PC-3 (cell line): ENCODE measurements at regions of chr4 and their contacts with region 1.

Region 1: GRCh38 chr4:112604589-112604988 is 32.1 kb downstream of the ZGRF1 start:
- DNase-seq: peak; percentile 55
- ATAC-seq: peak; percentile 88
- H3K4me3 ChIP-seq: no peak overlapping the region
- H3K27ac ChIP-seq: no peak overlapping the region
- H3K4me1 ChIP-seq: no peaks in the 10 kb centered on the region
- H3K27me3 ChIP-seq: no peaks in the 10 kb centered on the region
- CTCF ChIP-seq: peak; percentile 64

Region 2: GRCh38 chr4:112523764-112524505 is 80.7 kb before region 1 on chr4:
- CTCF ChIA-PET with region 1: no interaction called
- POLR2A ChIA-PET with region 1: no interaction called
- intact Hi-C with region 1: loop called (anchors 2 kb)
- DNase-seq: peak; percentile 71
- ATAC-seq: peak; percentile 92
- H3K4me3 ChIP-seq: peak overlapping the region; percentile 79
- H3K27ac ChIP-seq: no peak overlapping the region
- H3K4me1 ChIP-seq: no peaks in the 10 kb centered on the region
- H3K27me3 ChIP-seq: peaks cover 16% of the 10 kb centered on the region
- CTCF ChIP-seq: peak; percentile 83